ENCODE measurements at regions of chr2 and their contacts with region 1.

Region 1: DNA sequence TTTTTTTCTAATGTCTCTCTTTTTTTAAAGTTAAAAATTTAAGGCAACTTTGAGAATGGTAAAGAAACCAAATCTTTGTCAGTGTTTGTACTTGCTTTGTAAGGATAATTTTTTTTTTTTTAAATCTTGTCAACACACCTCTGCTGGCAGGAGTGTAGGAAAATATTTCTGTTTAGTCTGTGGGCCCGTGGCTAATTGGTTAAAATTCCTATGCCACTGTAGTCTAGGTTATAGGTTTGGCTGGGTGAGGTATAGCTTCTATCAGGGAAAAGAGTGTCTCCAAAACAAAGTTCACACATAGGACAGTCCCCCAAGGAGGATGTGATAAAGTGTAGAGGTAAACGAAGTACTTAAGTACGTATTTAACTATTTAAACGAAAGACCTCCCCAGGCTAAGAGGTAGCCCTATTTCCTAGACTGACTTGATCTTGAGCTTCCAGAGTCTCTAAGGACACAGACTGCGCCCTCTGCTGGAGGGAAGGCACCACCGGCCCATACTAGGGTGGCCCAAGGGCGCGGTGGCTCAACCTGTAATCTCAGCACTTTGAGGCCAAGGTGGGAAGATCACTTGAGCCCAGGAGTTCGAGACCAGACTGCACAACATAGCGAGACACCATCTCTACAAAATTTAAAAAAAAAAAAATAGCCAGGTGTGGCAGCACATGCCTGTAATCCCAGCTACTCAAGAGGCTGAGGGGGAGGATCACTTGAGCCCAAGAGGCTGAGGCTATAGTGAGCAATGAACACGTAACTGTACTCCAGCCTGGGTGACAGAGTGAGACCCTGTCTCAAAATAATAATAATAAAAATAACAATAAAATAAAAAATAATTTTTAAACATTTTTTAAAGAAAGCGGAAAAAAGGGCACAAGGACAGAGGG is 8.9 kb downstream of the TEX44 start:
- DNase-seq: peak; percentile 75
- ATAC-seq: peak; percentile 61
- H3K4me3 ChIP-seq: no peak overlapping the region
- H3K27ac ChIP-seq: no peak overlapping the region
- H3K4me1 ChIP-seq: peaks cover 21% of the 10 kb centered on the region
- H3K27me3 ChIP-seq: peaks cover 7 to 27% of the 10 kb centered on the region in 2 experiments; a peak in 4 of 5 replicates
- CTCF ChIP-seq: peak; percentile 93
- EP300 ChIP-seq: no peak
- POLR2A ChIP-seq: no peak
- RAD21 ChIP-seq: peak; percentile 37; the same call in 1 of the 2 replicates

Region 2: GRCh38 chr2:231124838-231125568 is 476.6 kb before region 1 on chr2 and contains the start of gene HTR2B:
- CTCF ChIA-PET with region 1: no interaction called
- POLR2A ChIA-PET with region 1: no interaction called
- in situ Hi-C with region 1: no loop called
- intact Hi-C with region 1: no loop called
- DNase-seq: no peak
- ATAC-seq: no peak
- H3K4me3 ChIP-seq: no peak within 1 kb of the TSS
- H3K27ac ChIP-seq: peak within 1 kb of the TSS; percentile 7
- H3K4me1 ChIP-seq: peaks cover 17% of the 10 kb centered on the region
- H3K27me3 ChIP-seq: no peaks in the 10 kb centered on the region
- CTCF ChIP-seq: no peak
- EP300 ChIP-seq: no peak
- POLR2A ChIP-seq: no peak
- RAD21 ChIP-seq: no peak
- total RNA-seq, gene HTR2B: not detected in 2 replicates

Region 3: GRCh38 chr2:231482806-231483391 is 118.7 kb before region 1 on chr2:
- CTCF ChIA-PET with region 1: no interaction called
- POLR2A ChIA-PET with region 1: no interaction called
- in situ Hi-C with region 1: no loop called
- intact Hi-C with region 1: loop called (anchors 1 kb)
- DNase-seq: peak; percentile 65
- ATAC-seq: peak; percentile 98
- H3K4me3 ChIP-seq: peak overlapping the region; percentile 34 to 71 (median 70); a peak in 5 of 6 replicates
- H3K27ac ChIP-seq: no peak overlapping the region
- H3K4me1 ChIP-seq: peaks cover 7% of the 10 kb centered on the region
- H3K27me3 ChIP-seq: peaks cover 3 to 28% of the 10 kb centered on the region in 2 experiments; a peak in 2 of 5 replicates
- CTCF ChIP-seq: peak; percentile 97
- EP300 ChIP-seq: no peak
- POLR2A ChIP-seq: no peak
- RAD21 ChIP-seq: peak; percentile 82

Region 4: DNA sequence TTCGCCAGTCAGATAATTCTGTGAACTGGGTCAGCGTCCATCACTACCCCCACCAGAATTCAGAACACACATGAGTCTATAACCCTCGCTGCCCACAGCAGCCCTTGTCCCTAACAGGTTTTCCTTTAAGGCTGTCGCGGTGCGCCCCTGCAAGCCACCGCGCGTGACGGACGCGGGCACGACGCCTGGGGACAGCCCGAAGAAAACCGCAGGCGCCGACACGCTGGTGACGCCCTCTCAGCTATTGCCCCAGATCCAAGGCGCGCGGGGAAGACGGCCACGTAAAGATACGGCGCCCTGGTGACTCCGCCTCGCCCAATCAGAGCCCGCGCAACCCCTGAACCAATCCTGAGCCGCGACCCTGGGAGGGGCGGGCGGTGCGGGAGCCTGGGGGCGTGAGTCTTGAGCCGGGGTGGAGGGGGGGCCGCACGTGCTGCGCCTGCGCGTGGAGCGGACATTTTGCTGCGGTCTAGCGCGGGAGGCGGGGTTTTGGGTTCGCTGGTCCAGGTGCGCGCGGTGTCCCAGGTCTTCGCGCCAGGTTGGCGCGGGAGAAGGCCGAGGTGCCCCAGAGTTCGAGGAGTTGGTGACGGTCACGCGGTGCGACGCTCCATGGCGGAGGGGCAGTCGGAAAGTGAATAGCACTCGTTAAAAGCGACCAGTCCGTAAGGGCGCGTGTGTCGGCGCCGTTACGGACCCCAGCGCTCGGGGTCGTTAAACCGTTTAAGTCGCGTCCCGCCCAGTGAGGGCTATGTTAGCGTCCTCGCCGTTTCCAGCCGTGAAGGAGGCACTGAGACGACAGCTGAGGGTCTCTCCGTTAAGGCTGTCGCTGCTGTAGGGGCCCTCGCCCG is 87.3 kb before region 1 on chr2:
- CTCF ChIA-PET with region 1: interaction called, 9 read pairs
- POLR2A ChIA-PET with region 1: no interaction called
- in situ Hi-C with region 1: no loop called
- intact Hi-C with region 1: loop called (anchors 1 kb)
- DNase-seq: peak; percentile 62
- ATAC-seq: peak; percentile 96
- H3K4me3 ChIP-seq: peak overlapping the region in 2 of 3 experiments; percentile 30 to 69; a peak in 4 of 6 replicates
- H3K27ac ChIP-seq: no peak overlapping the region
- H3K4me1 ChIP-seq: peaks cover 10% of the 10 kb centered on the region; the same call in 1 of the 2 replicates
- H3K27me3 ChIP-seq: peaks cover 0 to 9% of the 10 kb centered on the region in 2 experiments; a peak in 2 of 5 replicates
- CTCF ChIP-seq: no peak
- EP300 ChIP-seq: no peak
- POLR2A ChIP-seq: peak; percentile 31 to 64; a peak in 3 of 4 replicates
- RAD21 ChIP-seq: no peak

Region 5: DNA sequence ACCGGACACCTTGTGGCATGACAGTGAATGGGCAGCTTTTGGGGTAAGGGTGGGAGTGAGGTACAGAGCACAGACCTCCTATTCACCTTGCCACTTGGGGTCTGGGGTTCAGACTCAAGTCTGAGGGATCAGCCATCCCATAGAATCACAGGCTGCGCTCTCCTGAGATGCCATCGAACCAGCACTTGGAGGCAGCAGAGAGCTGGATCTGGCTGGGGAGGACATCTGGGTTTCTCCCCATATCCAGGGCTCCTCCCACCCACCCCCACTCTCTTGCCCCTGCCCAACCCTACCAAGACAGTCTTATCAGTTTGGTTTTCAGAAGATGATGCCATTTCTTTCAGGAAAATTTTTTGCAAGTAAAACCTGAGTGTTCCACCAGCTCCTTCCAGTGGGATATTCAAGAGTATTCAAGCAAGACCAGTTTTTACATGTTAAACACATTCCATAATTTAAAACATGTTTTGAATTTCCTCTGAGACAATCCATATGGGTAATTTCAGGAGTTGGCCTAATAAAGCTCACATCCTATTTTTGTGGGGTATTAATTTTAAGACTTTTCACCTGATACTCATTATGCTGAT is 38.1 kb before region 1 on chr2:
- CTCF ChIA-PET with region 1: interaction called, 8 read pairs
- POLR2A ChIA-PET with region 1: no interaction called
- in situ Hi-C with region 1: no loop called
- intact Hi-C with region 1: loop called (anchors 1 kb)
- DNase-seq: peak; percentile 34
- ATAC-seq: peak; percentile 95
- H3K4me3 ChIP-seq: no peak overlapping the region
- H3K27ac ChIP-seq: no peak overlapping the region
- H3K4me1 ChIP-seq: no peaks in the 10 kb centered on the region
- H3K27me3 ChIP-seq: 0 out of 5 replicates have a peak, but pooled peaks cover 0 to 6% of the 10 kb centered on the region in 2 experiments
- CTCF ChIP-seq: peak; percentile 76
- EP300 ChIP-seq: no peak
- POLR2A ChIP-seq: no peak
- RAD21 ChIP-seq: 0 out of 2 replicates have a peak, but pooled peaks have one; percentile 21

Region 6: DNA sequence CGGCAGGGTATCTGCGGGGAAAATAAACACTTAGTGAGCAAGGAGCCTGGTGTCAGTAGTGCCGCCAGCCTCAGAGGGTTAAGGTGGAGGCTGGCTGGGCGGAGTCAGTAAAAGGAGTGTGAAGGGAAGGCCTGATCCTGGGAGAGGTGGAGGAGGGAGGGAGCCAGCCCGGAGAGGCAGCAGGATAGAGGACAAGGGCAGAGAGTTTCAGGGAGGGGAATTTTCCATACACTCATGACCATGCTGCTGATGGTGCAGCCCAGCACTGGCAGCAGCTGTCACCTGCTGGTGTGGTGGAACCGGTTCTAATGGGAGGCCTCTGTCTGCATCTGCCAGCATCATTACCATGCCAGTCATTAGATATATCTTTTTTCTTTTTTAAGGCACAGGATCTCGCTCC is 11.0 kb before region 1 on chr2:
- CTCF ChIA-PET with region 1: no interaction called
- POLR2A ChIA-PET with region 1: no interaction called
- in situ Hi-C with region 1: no loop called
- intact Hi-C with region 1: no loop called
- DNase-seq: no peak
- ATAC-seq: no peak; the same call in 2 of the 3 replicates
- H3K4me3 ChIP-seq: no peak overlapping the region
- H3K27ac ChIP-seq: no peak overlapping the region
- H3K4me1 ChIP-seq: no peaks in the 10 kb centered on the region
- H3K27me3 ChIP-seq: peaks cover 4 to 40% of the 10 kb centered on the region in 2 experiments
- CTCF ChIP-seq: no peak
- EP300 ChIP-seq: no peak
- POLR2A ChIP-seq: no peak
- RAD21 ChIP-seq: no peak